ENCODE measurements at regions of chrX and their contacts with region 1.

Region 1: GRCh38 chrX:153032397-153033118 is 23.7 kb upstream of the PNMA3 start:
- DNase-seq: peak; percentile 54 to 83 (median 74)
- H3K4me3 ChIP-seq: peak overlapping the region; percentile 32
- H3K27ac ChIP-seq: no peak overlapping the region
- H3K4me1 ChIP-seq: no peaks in the 10 kb centered on the region
- H3K27me3 ChIP-seq: no peaks in the 10 kb centered on the region
- CTCF ChIP-seq: peak; percentile 63 to 90 (median 89)
- EP300 ChIP-seq: no peak
- POLR2A ChIP-seq: no peak

Region 2: GRCh38 chrX:152969548-152969947 is 63.0 kb before region 1 on chrX:
- intact Hi-C with region 1: no loop called
- DNase-seq: no peak
- H3K4me3 ChIP-seq: no peak overlapping the region
- H3K27ac ChIP-seq: no peak overlapping the region
- H3K4me1 ChIP-seq: no peaks in the 10 kb centered on the region
- H3K27me3 ChIP-seq: no peaks in the 10 kb centered on the region
- CTCF ChIP-seq: no peak
- EP300 ChIP-seq: no peak
- POLR2A ChIP-seq: no peak

Region 3: DNA sequence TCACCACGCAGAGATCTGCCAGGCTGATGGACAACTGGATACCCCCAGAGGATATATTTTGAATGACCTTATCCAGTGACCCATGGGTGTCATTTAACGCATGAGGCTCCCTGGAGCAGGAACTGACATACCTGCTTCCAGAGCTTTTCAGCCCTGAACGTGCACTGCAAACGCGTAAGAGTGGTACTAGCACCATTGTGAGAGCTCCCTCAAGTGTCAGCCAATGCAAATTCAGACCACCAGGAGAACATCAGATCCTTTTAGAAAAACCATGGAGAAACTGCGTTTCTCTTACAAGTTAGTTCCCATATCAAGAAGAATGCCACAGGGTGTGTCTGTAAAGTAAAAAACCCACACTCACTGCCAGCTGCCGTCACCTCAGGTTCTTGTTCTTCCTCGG is 406.0 kb after region 1 on chrX:
- intact Hi-C with region 1: loop called in 1 of 4 experiments (anchors 10 kb)
- DNase-seq: no peak
- H3K4me3 ChIP-seq: no peak overlapping the region
- H3K27ac ChIP-seq: no peak overlapping the region
- H3K4me1 ChIP-seq: no peaks in the 10 kb centered on the region
- H3K27me3 ChIP-seq: no peaks in the 10 kb centered on the region
- CTCF ChIP-seq: no peak
- EP300 ChIP-seq: no peak
- POLR2A ChIP-seq: no peak

Region 4: GRCh38 chrX:153507484-153508178 is 475.1 kb after region 1 on chrX:
- intact Hi-C with region 1: loop called in 2 of 4 experiments (anchors 5 to 10 kb)
- DNase-seq: peak; percentile 76 to 90 (median 89)
- H3K4me3 ChIP-seq: no peak overlapping the region
- H3K27ac ChIP-seq: no peak overlapping the region
- H3K4me1 ChIP-seq: no peaks in the 10 kb centered on the region
- H3K27me3 ChIP-seq: no peaks in the 10 kb centered on the region
- CTCF ChIP-seq: peak; percentile 81 to 92 (median 82)
- EP300 ChIP-seq: no peak
- POLR2A ChIP-seq: no peak